Naive thymus-derived CD4-positive, alpha-beta T cell (primary cell): ENCODE measurements at regions of chr6 and their contacts with region 1.

Region 1: DNA sequence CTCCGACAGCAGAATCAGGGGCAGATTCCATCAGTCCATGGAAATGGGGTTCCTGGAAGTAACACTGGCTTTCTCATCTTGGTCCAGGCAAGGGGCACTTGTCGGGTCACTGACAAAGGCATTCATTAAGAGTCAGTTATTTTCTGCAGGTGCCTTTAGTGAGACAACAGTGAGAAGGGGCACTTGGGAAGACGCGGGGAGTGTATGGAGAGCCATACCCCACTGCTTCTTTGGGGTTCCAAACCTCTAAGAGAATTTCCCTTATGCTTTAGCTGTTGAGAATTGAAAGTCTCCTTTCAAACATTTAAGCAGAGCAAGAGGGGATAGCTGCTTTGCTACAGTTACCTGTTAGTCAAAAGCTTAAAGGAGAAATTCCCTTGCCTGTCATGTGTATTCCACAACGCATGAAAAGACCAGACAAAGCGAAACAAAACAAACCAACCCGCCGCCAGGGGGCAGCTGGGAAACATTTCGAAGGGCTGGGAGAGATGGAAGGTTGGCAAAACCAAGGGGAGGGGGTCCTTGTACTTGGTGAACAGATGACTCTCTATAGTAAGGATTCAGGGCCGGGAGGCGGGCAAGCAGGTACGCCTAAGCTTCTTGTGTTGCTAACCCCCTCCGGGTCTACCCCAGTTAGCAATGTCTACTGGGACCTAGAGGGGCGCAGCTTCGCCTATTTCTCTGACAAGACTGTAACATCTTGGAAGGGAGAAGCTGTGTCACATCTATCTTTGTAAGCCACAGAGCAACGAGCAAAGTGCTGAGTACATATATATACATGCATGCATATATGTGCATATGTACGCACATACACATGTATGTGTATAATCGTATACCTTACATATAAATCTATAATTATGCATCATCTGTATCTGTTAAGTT is 474.9 kb upstream of the AGPAT4 start:
- DNase-seq: peak in 1 of 9 donors; percentile 22
- ATAC-seq: no peak
- H3K4me3 ChIP-seq: no peak overlapping the region
- H3K4me3 Mint-ChIP-seq: no peak overlapping the region
- H3K27ac ChIP-seq: no peak overlapping the region
- H3K27ac Mint-ChIP-seq: no peak overlapping the region
- H3K4me1 ChIP-seq: no peaks in the 10 kb centered on the region
- H3K4me1 Mint-ChIP-seq: no peaks in the 10 kb centered on the region
- H3K27me3 ChIP-seq: no peaks in the 10 kb centered on the region
- H3K27me3 Mint-ChIP-seq: no peaks in the 10 kb centered on the region

Region 2: GRCh38 chr6:161761966-161762365 is 13.2 kb after region 1 on chr6:
- CTCF ChIA-PET with region 1: no interaction called
- POLR2A ChIA-PET with region 1: no interaction called
- intact Hi-C with region 1: no loop called
- DNase-seq: no peak
- ATAC-seq: no peak
- H3K4me3 ChIP-seq: no peak overlapping the region
- H3K4me3 Mint-ChIP-seq: no peak overlapping the region
- H3K27ac ChIP-seq: no peak overlapping the region
- H3K27ac Mint-ChIP-seq: no peak overlapping the region
- H3K4me1 ChIP-seq: no peaks in the 10 kb centered on the region
- H3K4me1 Mint-ChIP-seq: no peaks in the 10 kb centered on the region
- H3K27me3 ChIP-seq: no peaks in the 10 kb centered on the region
- H3K27me3 Mint-ChIP-seq: no peaks in the 10 kb centered on the region

Region 3: GRCh38 chr6:161882196-161882765 is 133.5 kb after region 1 on chr6:
- CTCF ChIA-PET with region 1: no interaction called
- POLR2A ChIA-PET with region 1: no interaction called
- intact Hi-C with region 1: no loop called
- DNase-seq: no peak
- ATAC-seq: no peak
- H3K4me3 ChIP-seq: no peak overlapping the region
- H3K4me3 Mint-ChIP-seq: no peak overlapping the region
- H3K27ac ChIP-seq: no peak overlapping the region
- H3K27ac Mint-ChIP-seq: no peak overlapping the region
- H3K4me1 ChIP-seq: no peaks in the 10 kb centered on the region
- H3K4me1 Mint-ChIP-seq: no peaks in the 10 kb centered on the region
- H3K27me3 ChIP-seq: no peaks in the 10 kb centered on the region
- H3K27me3 Mint-ChIP-seq: no peaks in the 10 kb centered on the region

Region 4: GRCh38 chr6:161922631-161923119 is 173.9 kb after region 1 on chr6:
- CTCF ChIA-PET with region 1: interaction called, 3 read pairs
- POLR2A ChIA-PET with region 1: no interaction called
- intact Hi-C with region 1: loop called in 1 of 2 experiments (anchors 5 kb)
- DNase-seq: peak in 1 of 9 donors; percentile 24
- ATAC-seq: no peak
- H3K4me3 ChIP-seq: no peak overlapping the region
- H3K4me3 Mint-ChIP-seq: no peak overlapping the region
- H3K27ac ChIP-seq: no peak overlapping the region
- H3K27ac Mint-ChIP-seq: no peak overlapping the region
- H3K4me1 ChIP-seq: no peaks in the 10 kb centered on the region
- H3K4me1 Mint-ChIP-seq: no peaks in the 10 kb centered on the region
- H3K27me3 ChIP-seq: no peaks in the 10 kb centered on the region
- H3K27me3 Mint-ChIP-seq: no peaks in the 10 kb centered on the region